Activated CD8-positive, alpha-beta T cell treated with anti-CD3 and anti-CD28 coated beads for 36 hours (primary cell): ENCODE measurements at regions of chr14 and their contacts with region 1.

Region 1: GRCh38 chr14:38197001-38197783 is 10.5 kb upstream of the SSTR1 start:
- DNase-seq: no peak
- ATAC-seq: no peak
- H3K4me3 Mint-ChIP-seq: no peak overlapping the region
- H3K27ac Mint-ChIP-seq: no peak overlapping the region
- H3K4me1 Mint-ChIP-seq: peaks cover 4% of the 10 kb centered on the region
- H3K27me3 Mint-ChIP-seq: no peaks in the 10 kb centered on the region
- CTCF ChIP-seq: peak; percentile 66

Region 2: GRCh38 chr14:37903343-37904191 is 293.6 kb before region 1 on chr14:
- CTCF ChIA-PET with region 1: interaction called, 10 read pairs
- POLR2A ChIA-PET with region 1: no interaction called
- intact Hi-C with region 1: no loop called
- DNase-seq: peak; percentile 17
- ATAC-seq: no peak
- H3K4me3 Mint-ChIP-seq: no peak overlapping the region
- H3K27ac Mint-ChIP-seq: no peak overlapping the region
- H3K4me1 Mint-ChIP-seq: no peaks in the 10 kb centered on the region
- H3K27me3 Mint-ChIP-seq: peaks cover 9% of the 10 kb centered on the region
- CTCF ChIP-seq: peak; percentile 73

Region 3: DNA sequence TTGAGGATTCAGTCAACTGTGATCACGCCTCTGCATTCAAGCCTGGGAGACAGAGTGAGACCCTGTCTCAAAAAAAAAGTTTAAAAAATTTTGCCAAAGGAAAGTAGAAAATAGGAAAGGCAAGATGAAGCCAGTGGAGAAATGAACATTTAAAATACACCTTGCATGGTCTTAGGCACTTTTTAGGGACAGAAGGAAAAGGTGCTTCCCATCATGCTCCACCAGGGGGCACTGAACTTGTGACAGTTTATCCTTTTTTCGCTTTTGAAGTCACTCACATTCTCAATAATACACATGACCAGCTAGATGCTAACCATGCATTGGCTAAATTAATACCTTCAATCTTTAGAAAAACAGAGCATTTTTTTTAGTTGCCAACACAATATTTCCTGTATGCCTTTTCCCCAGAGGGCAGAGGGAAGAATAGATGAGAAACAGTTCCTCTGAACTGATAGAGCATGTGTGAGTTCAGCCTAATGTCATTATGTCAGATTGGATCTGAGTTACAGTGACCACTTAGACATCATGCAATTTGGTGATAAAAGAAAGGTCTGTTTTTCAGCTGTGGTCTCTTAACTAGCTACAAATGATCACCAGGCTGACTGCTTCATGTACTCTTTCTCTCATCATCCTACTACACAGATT is 211.2 kb before region 1 on chr14:
- CTCF ChIA-PET with region 1: interaction called, 8 read pairs
- POLR2A ChIA-PET with region 1: no interaction called
- intact Hi-C with region 1: loop called (anchors 5 kb)
- DNase-seq: peak; percentile 67
- ATAC-seq: peak; percentile 53
- H3K4me3 Mint-ChIP-seq: no peak overlapping the region
- H3K27ac Mint-ChIP-seq: no peak overlapping the region
- H3K4me1 Mint-ChIP-seq: no peaks in the 10 kb centered on the region
- H3K27me3 Mint-ChIP-seq: no peaks in the 10 kb centered on the region
- CTCF ChIP-seq: peak; percentile 76

Region 4: GRCh38 chr14:38208618-38209562 is 11.7 kb after region 1 on chr14:
- CTCF ChIA-PET with region 1: interaction called, 14 read pairs
- POLR2A ChIA-PET with region 1: interaction called, 3 read pairs
- intact Hi-C with region 1: no loop called
- DNase-seq: peak; percentile 11
- ATAC-seq: peak; percentile 61
- H3K4me3 Mint-ChIP-seq: peak overlapping the region; percentile 20
- H3K27ac Mint-ChIP-seq: no peak overlapping the region
- H3K4me1 Mint-ChIP-seq: peaks cover 23% of the 10 kb centered on the region
- H3K27me3 Mint-ChIP-seq: peaks cover 58% of the 10 kb centered on the region
- CTCF ChIP-seq: no peak